ENCODE measurements at regions of chr2 and their contacts with region 1.

Region 1: GRCh38 chr2:222655787-222656525 is at the start of gene FARSB:
- DNase-seq: peak; percentile 96
- ATAC-seq: peak; percentile 92
- H3K4me3 Mint-ChIP-seq: peak within 1 kb of the TSS; percentile 97
- H3K27ac Mint-ChIP-seq: peak within 1 kb of the TSS; percentile 95
- H3K4me1 Mint-ChIP-seq: peaks cover 38% of the 10 kb centered on the region
- H3K27me3 Mint-ChIP-seq: no peaks in the 10 kb centered on the region
- total RNA-seq, gene FARSB: 56.3 to 58.5 TPM

Region 2: GRCh38 chr2:222318026-222318711 is 337.8 kb before region 1 on chr2:
- CTCF ChIA-PET with region 1: no interaction called
- POLR2A ChIA-PET with region 1: no interaction called
- intact Hi-C with region 1: loop called in 1 of 2 experiments (anchors 2 kb)
- DNase-seq: peak; percentile 71
- ATAC-seq: peak; percentile 74
- H3K4me3 Mint-ChIP-seq: peak overlapping the region; percentile 77
- H3K27ac Mint-ChIP-seq: no peak overlapping the region
- H3K4me1 Mint-ChIP-seq: peaks cover 11% of the 10 kb centered on the region
- H3K27me3 Mint-ChIP-seq: peaks cover 58% of the 10 kb centered on the region

Region 3: GRCh38 chr2:222572751-222573174 is 83.2 kb before region 1 on chr2:
- CTCF ChIA-PET with region 1: no interaction called
- POLR2A ChIA-PET with region 1: no interaction called
- intact Hi-C with region 1: no loop called
- DNase-seq: no peak
- ATAC-seq: no peak
- H3K4me3 Mint-ChIP-seq: no peak overlapping the region
- H3K27ac Mint-ChIP-seq: no peak overlapping the region
- H3K4me1 Mint-ChIP-seq: peaks cover 5% of the 10 kb centered on the region
- H3K27me3 Mint-ChIP-seq: no peaks in the 10 kb centered on the region

Region 4: GRCh38 chr2:222690564-222691200 is 34.7 kb after region 1 on chr2:
- CTCF ChIA-PET with region 1: interaction called, 5 read pairs
- POLR2A ChIA-PET with region 1: interaction called, 3 read pairs
- intact Hi-C with region 1: loop called in 1 of 2 experiments (anchors 1 kb)
- DNase-seq: peak; percentile 88
- ATAC-seq: peak; percentile 96
- H3K4me3 Mint-ChIP-seq: no peak overlapping the region
- H3K27ac Mint-ChIP-seq: no peak overlapping the region
- H3K4me1 Mint-ChIP-seq: peaks cover 8% of the 10 kb centered on the region
- H3K27me3 Mint-ChIP-seq: no peaks in the 10 kb centered on the region

Region 5: GRCh38 chr2:222860740-222861410 is 204.9 kb after region 1 on chr2 and contains the start of gene ACSL3:
- CTCF ChIA-PET with region 1: no interaction called
- POLR2A ChIA-PET with region 1: interaction called, 3 read pairs
- intact Hi-C with region 1: loop called in 1 of 2 experiments (anchors 1 kb)
- DNase-seq: peak; percentile 97
- ATAC-seq: peak; percentile 100
- H3K4me3 Mint-ChIP-seq: peak within 1 kb of the TSS; percentile 67
- H3K27ac Mint-ChIP-seq: peak within 1 kb of the TSS; percentile 91
- H3K4me1 Mint-ChIP-seq: peaks cover 9% of the 10 kb centered on the region
- H3K27me3 Mint-ChIP-seq: peaks cover 4% of the 10 kb centered on the region
- total RNA-seq, gene ACSL3: 46.2 to 48.8 TPM

Region 6: GRCh38 chr2:223837287-223838061 is 1181.5 kb after region 1 on chr2 and contains the start of gene AP1S3:
- CTCF ChIA-PET with region 1: no interaction called
- POLR2A ChIA-PET with region 1: no interaction called
- intact Hi-C with region 1: loop called in 1 of 2 experiments (anchors 5 kb)
- DNase-seq: peak; percentile 88
- ATAC-seq: peak; percentile 98
- H3K4me3 Mint-ChIP-seq: peak within 1 kb of the TSS; percentile 86
- H3K27ac Mint-ChIP-seq: peak within 1 kb of the TSS; percentile 82
- H3K4me1 Mint-ChIP-seq: peaks cover 13% of the 10 kb centered on the region
- H3K27me3 Mint-ChIP-seq: no peaks in the 10 kb centered on the region
- total RNA-seq, gene AP1S3: 8.8 to 10.1 TPM

Measured in activated CD4-positive, alpha-beta T cell treated with anti-CD3 and anti-CD28 coated beads for 36 hours (primary cell).